ENCODE measurements at regions of chr5 and their contacts with region 1.

Region 1: GRCh38 chr5:173283318-173284288 is 44.6 kb downstream of the STC2 start:
- DNase-seq: peak; percentile 72
- H3K4me3 ChIP-seq: peak overlapping the region in 2 of 4 donors; percentile 18 to 29
- H3K27ac ChIP-seq: no peak overlapping the region
- H3K4me1 ChIP-seq: peaks cover 0 to 11% (median 8%) of the 10 kb centered on the region in 4 donors
- H3K27me3 ChIP-seq: peaks cover 0 to 43% (median 5%) of the 10 kb centered on the region in 3 donors
- CTCF ChIP-seq: peak; percentile 39 to 71 (median 54)
- EP300 ChIP-seq: no peak
- POLR2A ChIP-seq: no peak

Region 2: GRCh38 chr5:172707285-172708182 is 576.1 kb before region 1 on chr5:
- intact Hi-C with region 1: loop called (anchors 10 kb)
- DNase-seq: no peak
- H3K4me3 ChIP-seq: no peak overlapping the region
- H3K27ac ChIP-seq: no peak overlapping the region
- H3K4me1 ChIP-seq: no peaks in the 10 kb centered on the region
- H3K27me3 ChIP-seq: peaks cover 0 to 3% (median 0%) of the 10 kb centered on the region in 3 donors
- CTCF ChIP-seq: peak in 1 of 4 experiments; percentile 14
- EP300 ChIP-seq: no peak
- POLR2A ChIP-seq: no peak

Region 3: DNA sequence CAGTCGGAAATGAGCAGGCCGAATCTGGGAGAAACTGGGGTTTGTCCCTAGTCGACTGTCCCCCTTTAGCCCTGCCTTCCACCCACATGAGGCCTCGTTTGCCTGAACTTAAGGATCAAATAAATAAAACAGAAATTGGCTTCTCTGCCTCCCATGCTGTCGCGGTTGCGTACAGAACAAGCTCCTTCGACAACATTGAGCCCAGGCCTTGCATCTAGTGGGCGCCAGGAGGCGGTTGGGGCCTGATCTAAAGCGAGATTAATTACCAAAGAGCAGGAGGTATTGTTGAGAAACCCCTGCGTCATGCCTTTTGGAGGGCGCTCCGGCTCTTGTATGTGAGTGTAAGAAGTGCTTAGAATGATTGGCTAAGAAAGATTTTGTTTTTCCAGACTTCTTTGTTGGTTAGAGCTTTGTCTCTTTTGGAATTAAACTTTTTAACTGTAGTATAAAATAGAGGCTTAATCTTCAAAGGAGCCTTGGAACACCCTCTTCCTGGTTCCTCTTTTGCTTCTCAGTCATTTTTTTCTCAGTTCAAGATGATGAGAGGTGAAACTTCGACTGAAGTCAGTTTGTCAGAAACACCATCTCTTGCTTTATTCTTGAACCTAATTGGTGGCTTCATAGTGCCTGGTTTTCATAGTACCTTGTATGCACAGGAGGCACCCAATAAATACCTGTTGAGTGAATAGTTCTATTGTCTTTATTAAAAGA is 299.2 kb before region 1 on chr5:
- intact Hi-C with region 1: loop called (anchors 10 kb)
- DNase-seq: peak; percentile 93
- H3K4me3 ChIP-seq: peak overlapping the region; percentile 78 to 97 (median 88)
- H3K27ac ChIP-seq: peak overlapping the region; percentile 93 to 97 (median 96)
- H3K4me1 ChIP-seq: peaks cover 0 to 29% (median 18%) of the 10 kb centered on the region in 4 donors
- H3K27me3 ChIP-seq: no peaks in the 10 kb centered on the region
- CTCF ChIP-seq: peak in 1 of 4 experiments; percentile 43
- EP300 ChIP-seq: no peak
- POLR2A ChIP-seq: no peak